ENCODE measurements at regions of chr3 and their contacts with region 1.

Region 1: GRCh38 chr3:15113463-15113862 is 14.5 kb upstream of the RBSN start:
- DNase-seq: no peak
- H3K4me3 ChIP-seq: no peak overlapping the region
- H3K27ac ChIP-seq: no peak overlapping the region
- H3K4me1 ChIP-seq: no peaks in the 10 kb centered on the region
- H3K27me3 ChIP-seq: no peaks in the 10 kb centered on the region
- CTCF ChIP-seq: no peak
- POLR2A ChIP-seq: no peak

Region 2: GRCh38 chr3:15171096-15171495 is 57.6 kb after region 1 on chr3:
- intact Hi-C with region 1: loop called in 1 of 2 experiments (anchors 10 kb)
- DNase-seq: no peak
- H3K4me3 ChIP-seq: peak overlapping the region in 1 of 4 donors; percentile 9
- H3K27ac ChIP-seq: no peak overlapping the region
- H3K4me1 ChIP-seq: no peaks in the 10 kb centered on the region
- H3K27me3 ChIP-seq: no peaks in the 10 kb centered on the region
- CTCF ChIP-seq: no peak
- POLR2A ChIP-seq: no peak

Region 3: GRCh38 chr3:15186101-15186476 is 72.6 kb after region 1 on chr3:
- intact Hi-C with region 1: no loop called
- DNase-seq: no peak
- H3K4me3 ChIP-seq: no peak overlapping the region
- H3K27ac ChIP-seq: no peak overlapping the region
- H3K4me1 ChIP-seq: no peaks in the 10 kb centered on the region
- H3K27me3 ChIP-seq: no peaks in the 10 kb centered on the region
- CTCF ChIP-seq: no peak
- POLR2A ChIP-seq: no peak